Transverse colon (tissue), 4 donors: ENCODE measurements at regions of chr15 and their contacts with region 1.

Region 1: DNA sequence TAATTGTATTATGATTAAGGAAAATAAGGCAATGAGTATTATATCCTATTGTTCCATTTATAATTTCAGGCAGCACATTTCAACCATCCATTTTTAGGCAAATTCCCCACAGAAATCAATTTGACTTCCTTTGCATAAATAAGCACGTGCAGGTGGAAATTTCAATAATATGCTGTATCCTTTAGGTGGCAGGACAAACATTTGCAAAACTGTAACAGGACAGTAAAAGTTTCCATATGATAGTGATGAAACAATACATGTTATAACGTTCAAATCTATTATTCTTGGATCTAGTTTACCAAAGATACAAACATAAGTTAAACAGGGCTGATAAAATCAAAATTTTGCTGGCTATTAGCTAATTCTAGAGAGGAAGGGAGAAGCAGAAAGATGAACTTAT is 8.5 kb downstream of the UACA start:
- DNase-seq: no peak
- H3K4me3 ChIP-seq: no peak overlapping the region
- H3K27ac ChIP-seq: no peak overlapping the region
- H3K4me1 ChIP-seq: peaks cover 0 to 25% (median 6%) of the 10 kb centered on the region in 4 donors
- H3K27me3 ChIP-seq: no peaks in the 10 kb centered on the region
- CTCF ChIP-seq: no peak
- EP300 ChIP-seq: no peak
- POLR2A ChIP-seq: no peak

Region 2: DNA sequence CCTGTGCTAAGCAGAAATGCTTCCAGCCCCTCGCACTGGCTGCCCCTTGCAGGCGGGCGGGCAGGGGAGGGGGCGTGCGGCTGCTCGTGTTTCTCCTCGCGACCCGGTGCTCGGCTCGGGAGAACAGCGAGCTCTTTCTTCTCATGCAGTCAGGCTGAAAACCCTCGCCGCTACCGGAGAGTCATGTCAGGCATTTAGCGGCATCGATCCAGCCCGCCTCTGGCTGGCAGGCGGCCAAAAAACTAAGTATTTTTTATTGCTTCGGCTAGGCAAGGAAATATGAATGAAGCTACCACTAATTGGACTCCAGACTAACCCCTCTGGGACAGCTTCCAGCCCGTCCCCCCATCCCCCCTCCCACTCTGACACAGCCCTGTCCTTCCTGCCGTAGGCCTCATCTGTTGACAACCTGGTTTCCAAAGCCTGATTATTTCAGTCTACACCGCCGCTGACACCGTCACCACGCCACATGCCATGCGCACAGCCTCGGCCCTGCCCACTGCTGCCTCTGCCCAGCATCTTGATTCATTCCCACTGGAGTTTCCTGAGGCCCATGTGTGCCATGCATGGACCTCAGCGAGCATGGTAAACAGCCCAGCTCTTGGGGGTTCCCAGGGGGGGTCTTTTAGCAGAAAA is 692.4 kb before region 1 on chr15:
- in situ Hi-C with region 1: no loop called
- intact Hi-C with region 1: no loop called
- DNase-seq: peak; percentile 84
- H3K4me3 ChIP-seq: peak overlapping the region in 1 of 4 donors; percentile 8
- H3K27ac ChIP-seq: peak overlapping the region in 3 of 4 donors; percentile 66 to 76 (median 73)
- H3K4me1 ChIP-seq: peaks cover 16 to 41% (median 37%) of the 10 kb centered on the region in 4 donors
- H3K27me3 ChIP-seq: no peaks in the 10 kb centered on the region
- CTCF ChIP-seq: no peak
- EP300 ChIP-seq: no peak
- POLR2A ChIP-seq: no peak

Region 3: GRCh38 chr15:70707686-70708300 is 47.1 kb before region 1 on chr15:
- in situ Hi-C with region 1: no loop called
- intact Hi-C with region 1: loop called (anchors 2 kb)
- DNase-seq: no peak
- H3K4me3 ChIP-seq: no peak overlapping the region
- H3K27ac ChIP-seq: no peak overlapping the region
- H3K4me1 ChIP-seq: peaks cover 0 to 15% (median 5%) of the 10 kb centered on the region in 4 donors
- H3K27me3 ChIP-seq: no peaks in the 10 kb centered on the region
- CTCF ChIP-seq: no peak
- EP300 ChIP-seq: no peak
- POLR2A ChIP-seq: no peak

Region 4: GRCh38 chr15:70729164-70729563 is 25.7 kb before region 1 on chr15:
- in situ Hi-C with region 1: no loop called
- intact Hi-C with region 1: no loop called
- DNase-seq: no peak
- H3K4me3 ChIP-seq: no peak overlapping the region
- H3K27ac ChIP-seq: no peak overlapping the region
- H3K4me1 ChIP-seq: no peaks in the 10 kb centered on the region
- H3K27me3 ChIP-seq: no peaks in the 10 kb centered on the region
- CTCF ChIP-seq: no peak
- EP300 ChIP-seq: no peak
- POLR2A ChIP-seq: no peak

Region 5: DNA sequence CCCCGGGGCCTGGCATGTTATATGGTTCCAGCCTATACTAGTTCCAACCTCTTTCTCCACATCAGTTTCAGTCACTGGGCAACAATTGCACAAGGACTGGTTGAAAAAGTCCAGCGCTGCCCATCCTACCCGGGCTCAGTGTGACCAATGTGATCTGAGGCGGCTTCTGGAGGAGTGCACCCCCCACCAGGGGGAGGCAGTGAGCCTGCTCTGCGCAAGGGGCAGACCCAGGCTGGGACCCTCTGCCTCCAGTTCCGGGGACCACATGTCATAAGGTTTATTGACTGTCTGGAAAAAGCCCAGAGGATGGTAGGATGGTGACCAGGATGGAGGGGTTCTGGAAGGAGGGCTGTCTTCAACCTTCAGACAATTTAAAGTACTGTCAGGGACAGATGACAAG is 1029.9 kb after region 1 on chr15:
- in situ Hi-C with region 1: no loop called
- intact Hi-C with region 1: no loop called
- DNase-seq: no peak
- H3K4me3 ChIP-seq: no peak overlapping the region
- H3K27ac ChIP-seq: no peak overlapping the region
- H3K4me1 ChIP-seq: peaks cover 0 to 12% (median 6%) of the 10 kb centered on the region in 4 donors
- H3K27me3 ChIP-seq: no peaks in the 10 kb centered on the region
- CTCF ChIP-seq: no peak
- EP300 ChIP-seq: no peak
- POLR2A ChIP-seq: no peak